ENCODE measurements at regions of chr15 and their contacts with region 1.

Region 1: DNA sequence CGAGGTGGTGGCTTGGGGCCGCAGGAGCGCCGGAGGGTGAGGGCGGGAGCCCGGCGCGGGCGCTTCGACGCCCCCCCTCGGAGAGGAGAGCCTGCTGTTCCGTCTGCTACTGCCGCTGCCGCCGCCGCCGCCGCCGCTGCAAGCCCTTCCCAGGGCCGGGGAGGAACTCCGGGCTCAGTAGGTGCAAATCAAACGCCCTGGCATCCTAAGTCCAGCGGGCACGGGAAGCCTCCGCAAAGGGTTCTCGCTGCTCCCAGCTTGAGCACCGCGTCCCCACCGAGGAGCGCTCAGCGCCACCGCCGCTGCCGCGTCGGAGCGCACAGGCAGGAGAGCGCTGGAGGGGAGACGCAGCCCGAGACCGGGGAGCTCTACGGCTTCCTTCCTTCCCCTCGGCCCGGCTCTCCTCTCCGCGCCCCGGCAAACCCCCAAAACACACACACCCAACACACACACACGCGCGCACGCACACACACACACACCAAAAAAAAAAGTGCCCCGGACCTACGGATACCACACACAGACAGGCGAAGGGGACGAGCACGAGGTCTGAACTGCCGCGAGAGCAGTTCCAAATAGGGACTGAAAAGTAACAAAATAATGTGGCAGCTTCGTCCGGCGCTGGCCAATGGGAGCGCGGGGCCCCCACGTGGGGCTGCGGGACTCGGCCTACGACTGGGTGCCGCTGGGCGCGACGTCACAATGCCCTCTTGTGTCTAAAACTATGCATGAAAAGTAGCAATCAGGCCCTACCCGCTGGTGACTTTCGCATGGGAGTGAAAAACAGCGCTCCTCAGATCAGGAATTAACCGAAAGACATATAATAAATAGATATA is at the start of gene TLE3:
- DNase-seq: peak; percentile 97 to 98
- H3K4me3 ChIP-seq: peak within 1 kb of the TSS; percentile 89
- H3K4me3 Mint-ChIP-seq: peak within 1 kb of the TSS; percentile 98
- H3K27ac Mint-ChIP-seq: peak within 1 kb of the TSS; percentile 99
- H3K4me1 ChIP-seq: peaks cover 40% of the 10 kb centered on the region
- H3K4me1 Mint-ChIP-seq: peaks cover 19% of the 10 kb centered on the region
- H3K27me3 ChIP-seq: no peaks in the 10 kb centered on the region
- H3K27me3 Mint-ChIP-seq: no peaks in the 10 kb centered on the region
- CTCF ChIP-seq: no peak
- total RNA-seq, gene TLE3: 96.0 and 105 TPM in 2 replicates

Region 2: DNA sequence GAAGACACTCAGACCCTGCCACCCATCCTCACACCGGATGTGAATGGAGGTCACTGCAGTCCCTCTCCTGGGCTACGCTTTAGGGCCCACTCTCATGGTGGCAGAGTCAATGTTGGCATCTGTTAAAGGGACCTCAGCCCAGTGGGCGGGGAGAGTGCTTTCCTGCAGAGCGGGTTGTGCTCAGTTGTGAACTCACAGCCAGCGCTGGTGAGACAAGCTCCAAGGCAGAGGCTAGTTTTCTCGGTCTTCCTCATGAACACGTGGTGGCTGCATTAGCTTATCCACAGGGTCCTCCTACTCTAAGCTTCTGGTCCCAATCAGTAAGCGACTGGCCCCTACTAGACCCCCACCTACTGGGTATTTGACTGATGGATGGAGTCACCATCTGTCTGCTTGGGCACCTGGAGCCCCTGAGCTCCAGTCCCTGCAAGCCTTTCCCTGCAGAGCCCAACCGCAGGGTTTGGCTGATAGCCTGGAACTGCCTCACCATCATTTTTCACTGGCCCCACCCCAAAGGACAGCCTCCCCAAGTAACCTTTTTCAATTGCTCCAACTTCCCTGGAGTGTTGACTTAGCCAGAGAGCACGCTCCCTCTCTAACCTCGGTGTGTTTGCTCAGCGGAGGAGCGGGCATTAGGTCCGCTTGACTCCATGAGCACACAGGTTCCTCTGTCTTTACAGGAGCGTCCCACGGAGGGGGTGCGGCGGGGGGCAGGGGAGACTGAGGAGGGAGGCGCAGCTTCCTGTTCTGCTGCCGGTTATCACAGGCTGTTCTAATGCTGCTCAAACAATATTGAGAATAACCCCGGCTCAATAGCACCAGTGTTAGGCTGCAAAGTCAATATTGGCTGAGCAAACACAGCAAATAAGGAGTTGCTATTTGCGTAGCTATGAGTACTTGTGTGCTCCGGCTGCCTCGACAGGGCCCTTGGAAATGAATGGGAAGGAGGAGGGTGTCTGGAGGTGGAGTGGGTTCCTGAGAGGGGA is 503.3 kb before region 1 on chr15:
- CTCF ChIA-PET with region 1: no interaction called
- POLR2A ChIA-PET with region 1: interaction called, 3 read pairs
- intact Hi-C with region 1: loop called (anchors 2 kb)
- DNase-seq: peak; percentile 95 to 97
- H3K4me3 ChIP-seq: no peak overlapping the region
- H3K4me3 Mint-ChIP-seq: peak overlapping the region; percentile 45
- H3K27ac Mint-ChIP-seq: peak overlapping the region; percentile 78
- H3K4me1 ChIP-seq: peaks cover 43% of the 10 kb centered on the region
- H3K4me1 Mint-ChIP-seq: peaks cover 27% of the 10 kb centered on the region
- H3K27me3 ChIP-seq: no peaks in the 10 kb centered on the region
- H3K27me3 Mint-ChIP-seq: peaks cover 17% of the 10 kb centered on the region
- CTCF ChIP-seq: no peak

Region 3: GRCh38 chr15:70060993-70061305 is 36.6 kb before region 1 on chr15:
- CTCF ChIA-PET with region 1: no interaction called
- POLR2A ChIA-PET with region 1: no interaction called
- intact Hi-C with region 1: no loop called
- DNase-seq: peak in 1 of 2 experiments; percentile 16
- H3K4me3 ChIP-seq: no peak overlapping the region
- H3K4me3 Mint-ChIP-seq: no peak overlapping the region
- H3K27ac Mint-ChIP-seq: no peak overlapping the region
- H3K4me1 ChIP-seq: no peaks in the 10 kb centered on the region
- H3K4me1 Mint-ChIP-seq: no peaks in the 10 kb centered on the region
- H3K27me3 ChIP-seq: no peaks in the 10 kb centered on the region
- H3K27me3 Mint-ChIP-seq: no peaks in the 10 kb centered on the region
- CTCF ChIP-seq: no peak

Region 4: DNA sequence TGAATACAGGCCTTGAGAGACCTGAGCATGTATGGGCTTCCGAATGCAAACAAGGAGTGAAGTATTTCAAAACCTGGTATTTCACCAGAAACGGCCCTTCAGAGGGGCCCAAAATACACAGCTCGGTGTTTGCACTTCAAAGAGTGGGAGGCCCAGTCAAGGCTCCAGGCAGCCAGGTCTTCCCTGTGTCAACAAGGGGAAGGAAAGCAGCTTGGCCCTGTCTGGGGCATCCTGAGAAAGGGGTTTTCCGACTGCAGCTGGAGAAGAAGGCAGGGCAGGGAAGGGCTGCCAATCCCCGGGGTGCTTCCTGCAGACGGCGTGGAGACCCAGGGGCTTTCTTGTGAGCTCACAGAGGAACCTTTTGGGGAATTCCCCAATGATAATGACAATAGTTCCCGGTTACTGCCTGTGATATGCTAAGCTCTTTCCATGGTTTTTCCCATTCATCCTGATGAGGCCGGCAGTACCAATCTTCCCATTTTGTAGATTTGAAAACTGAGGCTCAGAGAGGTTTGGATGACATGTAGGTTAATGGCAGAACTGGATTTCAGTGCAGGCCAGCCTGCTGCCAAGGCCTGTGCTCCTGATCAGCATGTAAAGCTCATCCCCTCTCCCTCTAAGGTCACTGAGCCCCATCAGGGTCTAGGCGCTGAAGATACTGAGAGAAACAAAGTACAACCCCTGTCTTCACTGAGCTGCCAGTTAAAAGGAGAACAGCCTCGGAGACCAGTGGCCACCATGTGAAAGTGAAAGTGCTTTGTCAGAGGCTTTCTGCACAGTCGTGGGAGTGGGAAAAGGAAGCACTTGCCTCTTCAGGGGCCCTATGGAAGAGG is 43.2 kb after region 1 on chr15:
- CTCF ChIA-PET with region 1: interaction called, 9 read pairs
- POLR2A ChIA-PET with region 1: interaction called, 32 read pairs
- intact Hi-C with region 1: loop called (anchors 1 kb)
- DNase-seq: peak; percentile 91 to 95
- H3K4me3 ChIP-seq: no peak overlapping the region
- H3K4me3 Mint-ChIP-seq: peak overlapping the region; percentile 63
- H3K27ac Mint-ChIP-seq: peak overlapping the region; percentile 94
- H3K4me1 ChIP-seq: peaks cover 45% of the 10 kb centered on the region
- H3K4me1 Mint-ChIP-seq: peaks cover 45% of the 10 kb centered on the region
- H3K27me3 ChIP-seq: no peaks in the 10 kb centered on the region
- H3K27me3 Mint-ChIP-seq: no peaks in the 10 kb centered on the region
- CTCF ChIP-seq: no peak

Region 5: DNA sequence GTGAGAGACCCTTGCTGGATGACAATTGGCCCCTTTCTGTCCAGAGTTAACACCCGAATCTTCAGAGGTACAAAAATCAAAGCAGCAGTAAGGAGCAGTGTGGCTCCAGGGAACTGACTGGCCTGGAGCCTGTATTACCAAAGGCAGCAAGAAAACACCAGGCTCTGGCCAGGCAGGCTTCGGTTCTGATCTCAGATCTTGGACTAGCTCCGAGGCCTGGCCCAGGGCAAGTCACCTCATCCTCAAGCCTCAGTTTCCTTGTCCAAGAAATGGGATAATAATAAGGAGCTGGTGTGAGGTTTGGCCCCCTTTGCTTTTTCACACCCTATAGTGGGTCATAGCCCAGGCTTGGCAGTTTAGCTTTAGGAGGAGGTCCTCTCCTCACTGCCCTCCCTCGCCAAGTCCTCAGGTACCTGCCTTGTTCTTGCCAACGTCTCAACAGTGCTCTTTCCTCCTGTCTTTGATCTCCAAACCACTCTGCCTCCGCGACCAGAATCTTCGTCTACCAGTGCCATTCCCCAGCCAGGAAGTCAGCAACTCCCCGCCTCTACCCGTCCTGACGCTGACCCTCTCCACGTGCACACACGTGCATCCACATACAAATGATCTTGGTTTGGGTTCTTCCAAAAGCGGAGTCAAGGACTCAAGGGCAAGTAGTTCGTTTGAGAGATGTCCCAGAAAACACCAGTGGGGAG is 82.8 kb after region 1 on chr15:
- CTCF ChIA-PET with region 1: interaction called, 3 read pairs
- POLR2A ChIA-PET with region 1: no interaction called
- intact Hi-C with region 1: loop called (anchors 2 kb)
- DNase-seq: no peak
- H3K4me3 ChIP-seq: no peak overlapping the region
- H3K4me3 Mint-ChIP-seq: no peak overlapping the region
- H3K27ac Mint-ChIP-seq: peak overlapping the region; percentile 36
- H3K4me1 ChIP-seq: peaks cover 6% of the 10 kb centered on the region
- H3K4me1 Mint-ChIP-seq: peaks cover 8% of the 10 kb centered on the region
- H3K27me3 ChIP-seq: no peaks in the 10 kb centered on the region
- H3K27me3 Mint-ChIP-seq: no peaks in the 10 kb centered on the region
- CTCF ChIP-seq: no peak

Region 6: GRCh38 chr15:70494852-70495571 is 397.5 kb after region 1 on chr15:
- CTCF ChIA-PET with region 1: no interaction called
- POLR2A ChIA-PET with region 1: no interaction called
- intact Hi-C with region 1: loop called (anchors 2 kb)
- DNase-seq: peak; percentile 94 to 97
- H3K4me3 ChIP-seq: peak overlapping the region; percentile 17; the same call in 1 of the 2 replicates
- H3K4me3 Mint-ChIP-seq: peak overlapping the region; percentile 68
- H3K27ac Mint-ChIP-seq: peak overlapping the region; percentile 98
- H3K4me1 ChIP-seq: peaks cover 41% of the 10 kb centered on the region
- H3K4me1 Mint-ChIP-seq: peaks cover 56% of the 10 kb centered on the region
- H3K27me3 ChIP-seq: no peaks in the 10 kb centered on the region
- H3K27me3 Mint-ChIP-seq: no peaks in the 10 kb centered on the region
- CTCF ChIP-seq: no peak

Region 7: GRCh38 chr15:70653426-70653825 is 555.9 kb after region 1 on chr15:
- CTCF ChIA-PET with region 1: no interaction called
- POLR2A ChIA-PET with region 1: interaction called, 10 read pairs
- intact Hi-C with region 1: no loop called
- DNase-seq: no peak
- H3K4me3 ChIP-seq: no peak overlapping the region
- H3K4me3 Mint-ChIP-seq: no peak overlapping the region
- H3K27ac Mint-ChIP-seq: no peak overlapping the region
- H3K4me1 ChIP-seq: peaks cover 38% of the 10 kb centered on the region
- H3K4me1 Mint-ChIP-seq: peaks cover 21% of the 10 kb centered on the region
- H3K27me3 ChIP-seq: no peaks in the 10 kb centered on the region
- H3K27me3 Mint-ChIP-seq: no peaks in the 10 kb centered on the region
- CTCF ChIP-seq: no peak

Measured in Caco-2 (cell line).